ENCODE measurements at regions of chr2 and their contacts with region 1.

Region 1: GRCh38 chr2:85737481-85737880 is 16.3 kb upstream of the ATOH8 start:
- DNase-seq: no peak
- H3K4me3 ChIP-seq: no peak overlapping the region
- H3K27ac ChIP-seq: peak overlapping the region; percentile 46 to 47
- H3K4me1 ChIP-seq: peaks cover 14% of the 10 kb centered on the region
- H3K27me3 ChIP-seq: no peaks in the 10 kb centered on the region
- CTCF ChIP-seq: no peak
- POLR2A ChIP-seq: no peak

Region 2: DNA sequence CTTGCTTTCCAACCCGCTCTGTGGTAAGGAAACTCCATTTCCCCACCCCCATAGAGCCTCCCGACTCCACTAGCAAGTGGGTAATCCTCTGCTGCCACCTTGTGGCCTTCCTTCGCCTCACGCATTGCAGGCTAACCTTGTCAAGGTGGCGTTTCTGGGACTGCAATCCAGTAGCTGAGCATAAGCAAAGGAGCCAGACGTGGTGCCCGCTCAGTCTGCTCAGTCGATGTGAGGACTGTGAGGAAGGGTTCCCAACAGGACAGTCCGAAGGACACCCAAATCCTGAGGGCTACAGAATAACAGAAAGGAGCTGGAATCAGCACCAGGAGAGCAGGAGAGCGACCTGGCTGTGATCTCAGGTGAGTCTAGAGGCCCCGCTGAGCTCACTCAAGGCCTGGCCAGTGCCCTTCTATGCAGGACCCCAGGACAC is 1422.6 kb before region 1 on chr2:
- intact Hi-C with region 1: no loop called
- DNase-seq: peak; percentile 74
- H3K4me3 ChIP-seq: no peak overlapping the region
- H3K27ac ChIP-seq: no peak overlapping the region
- H3K4me1 ChIP-seq: no peaks in the 10 kb centered on the region
- H3K27me3 ChIP-seq: no peaks in the 10 kb centered on the region
- CTCF ChIP-seq: peak; percentile 30 to 80 (median 75)
- POLR2A ChIP-seq: no peak

Region 3: GRCh38 chr2:85777441-85777861 is 40.0 kb after region 1 on chr2:
- intact Hi-C with region 1: loop called (anchors 2 kb)
- DNase-seq: no peak
- H3K4me3 ChIP-seq: no peak overlapping the region
- H3K27ac ChIP-seq: no peak overlapping the region
- H3K4me1 ChIP-seq: no peaks in the 10 kb centered on the region
- H3K27me3 ChIP-seq: no peaks in the 10 kb centered on the region
- CTCF ChIP-seq: no peak
- POLR2A ChIP-seq: no peak

Region 4: DNA sequence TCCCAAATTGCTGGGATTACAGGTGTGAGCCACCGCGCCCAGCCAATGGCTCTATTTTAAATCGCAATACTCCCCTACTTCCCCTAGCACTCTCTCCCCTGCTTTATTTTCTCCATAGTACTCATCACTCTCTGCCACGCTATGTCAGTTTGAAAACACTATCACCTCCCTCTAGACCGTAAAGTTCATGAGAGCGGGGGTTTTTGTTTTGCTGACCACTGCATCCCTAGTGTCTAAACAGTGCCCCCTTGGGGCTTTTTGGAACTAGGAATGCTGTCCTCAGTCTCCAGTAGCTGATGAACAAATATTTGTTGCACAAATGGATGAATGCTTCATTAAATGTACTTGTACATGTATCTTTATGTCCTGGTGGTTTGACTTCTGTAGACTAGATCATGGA is 60.4 kb after region 1 on chr2:
- intact Hi-C with region 1: loop called (anchors 5 kb)
- DNase-seq: no peak
- H3K4me3 ChIP-seq: no peak overlapping the region
- H3K27ac ChIP-seq: no peak overlapping the region
- H3K4me1 ChIP-seq: no peaks in the 10 kb centered on the region
- H3K27me3 ChIP-seq: no peaks in the 10 kb centered on the region
- CTCF ChIP-seq: peak in 2 of 4 experiments; percentile 15 to 32
- POLR2A ChIP-seq: no peak

Region 5: DNA sequence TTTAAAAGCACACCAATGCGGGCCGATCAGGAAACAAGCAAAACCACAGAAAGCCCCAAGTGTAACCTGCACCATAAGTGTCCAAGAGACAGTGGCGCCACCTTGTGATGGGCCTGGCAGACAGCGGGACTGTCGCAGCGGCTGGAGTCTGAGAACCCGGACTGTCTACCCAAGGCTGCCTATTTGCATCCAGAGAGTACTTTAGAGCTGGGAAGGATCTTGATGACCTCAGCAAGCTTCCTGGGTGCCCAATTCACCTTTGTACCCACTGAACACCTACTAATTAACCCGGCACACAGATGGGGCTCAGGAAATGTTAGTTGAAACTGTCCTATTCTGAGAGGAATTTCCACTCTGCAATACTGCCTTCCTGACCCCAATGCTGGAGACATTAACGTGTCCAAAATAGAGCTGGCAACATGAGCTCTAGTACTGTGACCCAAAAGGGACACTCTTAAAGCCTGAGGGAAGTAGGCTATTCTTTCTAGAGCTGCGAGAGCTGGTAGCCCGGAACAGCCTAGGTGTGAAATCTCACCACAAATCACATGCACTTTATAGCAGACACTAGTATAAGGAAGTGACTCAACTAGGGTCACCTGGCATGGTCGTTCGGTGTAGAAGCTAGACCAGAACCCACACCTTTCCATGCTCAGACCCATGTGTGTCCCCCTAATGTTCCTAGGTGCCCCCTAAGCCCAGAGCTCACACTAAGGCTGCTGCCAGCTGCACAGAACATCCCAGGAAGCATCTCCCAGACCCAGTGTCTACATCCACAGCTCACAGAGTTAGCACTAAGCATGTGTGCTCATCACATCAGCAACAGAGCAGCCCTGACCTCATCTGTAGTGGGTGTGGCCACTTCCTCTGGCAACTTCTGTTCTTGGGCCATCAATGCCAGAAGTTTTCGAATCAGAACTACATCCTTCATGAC is 342.8 kb after region 1 on chr2:
- intact Hi-C with region 1: loop called (anchors 10 kb)
- DNase-seq: peak; percentile 70
- H3K4me3 ChIP-seq: no peak overlapping the region
- H3K27ac ChIP-seq: no peak overlapping the region
- H3K4me1 ChIP-seq: peaks cover 4% of the 10 kb centered on the region
- H3K27me3 ChIP-seq: no peaks in the 10 kb centered on the region
- CTCF ChIP-seq: peak; percentile 48 to 85 (median 73)
- POLR2A ChIP-seq: no peak